BJ (cell line): ENCODE measurements at regions of chr12 and their contacts with region 1.

Region 1: GRCh38 chr12:96985480-96986362 is 78.7 kb downstream of the NEDD1 start:
- DNase-seq: no peak
- H3K4me3 ChIP-seq: peak overlapping the region; percentile 48
- H3K27me3 ChIP-seq: peaks cover 4% of the 10 kb centered on the region
- CTCF ChIP-seq: peak; percentile 49

Region 2: DNA sequence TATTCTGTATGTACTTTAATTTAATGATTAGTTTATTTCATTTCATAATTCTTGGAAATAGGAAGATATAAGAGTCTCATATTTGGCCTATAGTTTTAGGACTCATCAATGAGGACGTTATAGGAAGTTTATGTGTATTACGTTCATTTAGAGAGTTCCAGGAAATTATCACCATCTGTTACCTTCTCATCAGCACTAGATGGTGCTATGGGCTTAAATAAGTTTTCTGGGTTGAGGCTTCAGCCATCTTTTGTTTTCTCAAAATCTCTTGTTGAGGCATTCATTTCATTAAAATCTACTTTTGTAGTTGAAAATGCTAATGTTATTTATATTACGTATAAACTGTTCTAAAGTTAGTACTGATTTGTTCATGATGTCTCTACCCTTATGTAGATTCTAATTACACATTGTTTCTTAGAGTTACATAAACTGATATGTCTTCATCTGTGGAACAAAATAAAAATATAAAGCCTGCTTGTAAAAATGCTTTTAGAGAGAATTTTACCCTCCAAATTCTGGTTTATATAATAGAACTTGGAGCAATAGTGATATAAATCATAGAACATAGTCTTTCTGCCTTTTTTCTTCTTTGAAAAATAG is 407.1 kb before region 1 on chr12:
- CTCF ChIA-PET with region 1: interaction called, 43 read pairs
- POLR2A ChIA-PET with region 1: no interaction called
- DNase-seq: peak; percentile 7
- H3K4me3 ChIP-seq: no peak overlapping the region
- H3K27me3 ChIP-seq: no peaks in the 10 kb centered on the region
- CTCF ChIP-seq: peak; percentile 59

Region 3: DNA sequence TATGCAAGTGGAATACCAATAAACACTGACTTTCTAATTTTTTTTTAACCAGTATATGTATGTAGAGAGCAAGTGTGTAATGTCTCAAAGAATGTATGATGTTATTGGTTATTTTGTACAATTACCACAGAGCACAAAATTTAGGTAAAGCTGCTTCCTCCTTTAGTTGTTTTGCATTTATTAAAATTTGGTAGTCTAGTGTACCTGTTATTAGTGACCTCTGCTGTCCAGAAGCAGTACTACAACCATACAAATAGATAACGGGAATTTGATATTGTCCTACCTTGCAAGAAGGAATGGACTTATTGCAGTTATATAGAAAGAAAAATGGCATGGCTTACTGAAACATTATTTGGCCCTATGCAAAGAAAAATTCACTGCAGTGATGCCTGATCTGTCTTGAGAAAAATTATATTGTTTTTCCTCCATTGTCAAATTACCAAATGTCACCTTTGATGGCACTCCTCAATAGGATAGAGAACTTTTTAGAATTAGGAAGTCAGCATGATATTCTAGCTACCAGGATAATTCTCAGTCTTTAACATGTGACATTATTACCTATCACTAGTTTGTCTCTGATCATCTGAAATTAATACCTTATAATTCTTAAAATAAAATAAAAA is 323.0 kb after region 1 on chr12:
- CTCF ChIA-PET with region 1: interaction called, 15 read pairs
- POLR2A ChIA-PET with region 1: no interaction called
- DNase-seq: peak; percentile 9
- H3K4me3 ChIP-seq: no peak overlapping the region
- H3K27me3 ChIP-seq: no peaks in the 10 kb centered on the region
- CTCF ChIP-seq: peak; percentile 65

Region 4: DNA sequence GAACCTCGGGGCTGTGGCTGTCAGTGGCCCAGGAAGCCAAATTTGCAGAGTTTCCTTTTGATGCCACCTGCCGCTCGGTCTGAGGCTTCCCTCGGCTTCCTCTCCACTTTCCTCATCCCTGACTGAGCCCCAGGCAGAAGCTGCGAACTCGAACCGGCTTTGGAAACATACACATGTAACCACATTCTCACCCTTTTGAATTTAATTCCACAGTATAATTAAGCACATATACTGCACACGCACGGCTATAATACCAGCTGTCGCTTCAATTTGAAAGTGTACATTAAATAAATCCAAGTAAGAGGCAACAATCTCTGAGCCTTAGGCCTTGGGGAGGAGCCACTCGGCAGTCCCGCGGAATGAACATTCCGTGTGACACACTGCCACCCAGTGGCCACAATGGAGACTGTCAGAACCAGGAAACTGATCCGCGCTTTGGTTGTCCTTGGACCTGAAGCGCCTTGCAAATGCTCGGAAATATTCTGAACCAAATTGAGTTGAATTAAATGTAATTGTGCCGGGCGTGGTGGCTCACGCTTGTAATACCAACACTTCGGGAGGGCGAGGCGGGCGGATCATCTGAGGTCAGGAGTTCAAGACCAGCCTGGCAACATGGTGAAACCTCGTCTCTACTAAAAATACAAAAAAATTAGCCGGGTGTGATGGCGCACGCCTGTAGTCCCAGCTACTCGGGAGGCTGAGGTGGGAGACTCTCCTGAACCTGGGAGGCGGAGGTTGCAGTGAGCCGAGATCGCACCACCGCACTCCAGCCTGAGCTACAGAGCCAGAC is 1411.8 kb after region 1 on chr12:
- CTCF ChIA-PET with region 1: interaction called, 18 read pairs
- POLR2A ChIA-PET with region 1: no interaction called
- DNase-seq: no peak
- H3K4me3 ChIP-seq: peak overlapping the region; percentile 34
- H3K27me3 ChIP-seq: no peaks in the 10 kb centered on the region; the same call in 1 of the 2 replicates
- CTCF ChIP-seq: peak; percentile 85